ENCODE measurements at regions of chr5 and their contacts with region 1.

Region 1: GRCh38 chr5:67752331-67752673 is 463.3 kb upstream of the PIK3R1 start:
- DNase-seq: no peak
- H3K4me3 ChIP-seq: no peak overlapping the region
- H3K27ac ChIP-seq: no peak overlapping the region
- H3K4me1 ChIP-seq: no peaks in the 10 kb centered on the region
- H3K27me3 ChIP-seq: no peaks in the 10 kb centered on the region
- CTCF ChIP-seq: no peak

Region 2: DNA sequence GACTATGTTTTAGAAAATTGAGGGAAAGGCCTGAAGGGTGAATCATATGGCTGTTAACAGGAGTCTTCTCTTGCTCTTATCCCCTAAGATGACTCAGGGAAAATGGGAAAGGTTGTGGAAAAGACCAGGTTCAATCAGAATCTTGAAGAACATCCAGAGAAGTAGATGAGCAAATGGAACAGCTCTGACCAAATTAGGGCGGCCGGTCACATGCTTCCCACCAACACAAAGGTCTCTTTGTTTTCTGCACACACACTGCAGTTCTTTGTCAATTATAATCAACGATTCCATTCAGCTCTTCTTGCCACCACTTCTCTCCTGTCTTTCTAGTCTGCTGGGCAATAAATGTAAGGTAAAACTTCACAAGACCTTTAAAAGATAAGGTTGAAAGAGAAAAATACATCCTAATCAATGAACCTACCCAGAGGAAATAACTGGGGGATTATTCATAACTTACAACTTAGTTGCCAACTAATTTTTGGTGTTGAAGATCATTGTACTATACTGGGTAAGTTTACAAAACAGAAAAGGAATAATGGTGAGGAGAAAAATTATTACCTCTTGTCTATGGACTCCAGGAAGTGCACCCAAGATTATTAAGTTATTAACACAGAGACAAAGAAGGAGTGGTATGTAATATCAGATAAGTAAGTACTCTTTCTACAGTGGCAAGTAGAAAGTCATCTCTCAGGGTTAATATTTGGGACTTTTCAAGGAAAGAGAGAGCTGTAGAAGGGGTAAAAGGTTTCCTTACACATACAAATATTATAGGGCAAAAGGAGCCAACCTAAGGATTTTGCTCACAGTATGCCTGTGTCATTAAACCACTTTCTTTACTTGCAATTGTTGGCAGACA is 21.3 kb after region 1 on chr5:
- CTCF ChIA-PET with region 1: no interaction called
- POLR2A ChIA-PET with region 1: no interaction called
- intact Hi-C with region 1: loop called (anchors 1 kb)
- DNase-seq: peak in 1 of 2 experiments; percentile 39
- H3K4me3 ChIP-seq: no peak overlapping the region
- H3K27ac ChIP-seq: peak overlapping the region; percentile 33; the same call in 1 of the 2 replicates
- H3K4me1 ChIP-seq: peaks cover 23% of the 10 kb centered on the region; the same call in 1 of the 2 replicates
- H3K27me3 ChIP-seq: no peaks in the 10 kb centered on the region
- CTCF ChIP-seq: no peak